Activated CD8-positive, alpha-beta T cell treated with anti-CD3 and anti-CD28 coated beads for 36 hours (primary cell): ENCODE measurements at regions of chr16 and their contacts with region 1.

Region 1: DNA sequence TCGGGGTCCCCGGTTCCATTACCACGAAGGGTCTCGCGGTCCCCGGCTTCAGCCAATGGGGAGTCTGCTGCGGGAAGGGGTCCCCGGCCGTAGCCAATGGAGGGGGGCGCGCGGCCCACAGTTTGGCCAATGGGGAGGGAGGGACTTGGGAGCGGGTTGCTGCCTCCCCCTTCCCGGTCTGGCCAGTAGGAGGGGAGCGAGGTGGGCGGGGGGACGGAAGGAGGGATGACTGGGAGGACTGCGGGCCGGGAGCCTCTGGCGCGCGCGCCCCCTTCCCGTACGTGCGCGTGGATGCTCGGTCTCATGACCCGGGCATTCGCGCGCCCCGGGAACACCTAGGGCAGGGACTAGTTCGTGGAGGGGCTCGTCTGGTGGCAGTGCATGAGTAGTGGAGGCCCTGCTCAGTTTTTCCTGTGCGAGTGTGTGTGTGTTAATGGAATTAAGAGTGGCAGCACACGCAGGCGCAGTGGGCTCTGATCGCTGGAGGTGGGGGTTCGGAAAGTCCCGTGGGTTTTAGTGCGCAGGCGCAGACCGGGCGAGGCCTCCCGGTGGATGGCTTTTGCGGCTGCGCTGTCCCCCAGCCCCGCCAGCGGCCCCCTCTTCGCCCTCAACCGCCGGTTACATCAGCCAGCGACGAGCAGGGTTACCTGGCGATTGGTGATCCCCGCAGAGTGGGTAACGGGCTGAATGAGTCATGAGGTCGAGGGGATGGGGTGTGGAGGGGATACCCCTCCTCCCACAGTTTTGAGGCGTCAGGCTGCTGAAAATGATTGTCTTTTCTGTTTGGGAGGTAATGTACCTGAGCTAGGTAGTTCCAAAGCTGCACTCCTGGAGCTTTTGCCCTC is 1.3 kb downstream of the ATXN2L start:
- DNase-seq: peak; percentile 98
- ATAC-seq: peak; percentile 78
- H3K4me3 Mint-ChIP-seq: peak overlapping the region; percentile 99
- H3K27ac Mint-ChIP-seq: peak overlapping the region; percentile 100
- H3K4me1 Mint-ChIP-seq: peaks cover 53% of the 10 kb centered on the region
- H3K27me3 Mint-ChIP-seq: no peaks in the 10 kb centered on the region
- CTCF ChIP-seq: no peak

Region 2: DNA sequence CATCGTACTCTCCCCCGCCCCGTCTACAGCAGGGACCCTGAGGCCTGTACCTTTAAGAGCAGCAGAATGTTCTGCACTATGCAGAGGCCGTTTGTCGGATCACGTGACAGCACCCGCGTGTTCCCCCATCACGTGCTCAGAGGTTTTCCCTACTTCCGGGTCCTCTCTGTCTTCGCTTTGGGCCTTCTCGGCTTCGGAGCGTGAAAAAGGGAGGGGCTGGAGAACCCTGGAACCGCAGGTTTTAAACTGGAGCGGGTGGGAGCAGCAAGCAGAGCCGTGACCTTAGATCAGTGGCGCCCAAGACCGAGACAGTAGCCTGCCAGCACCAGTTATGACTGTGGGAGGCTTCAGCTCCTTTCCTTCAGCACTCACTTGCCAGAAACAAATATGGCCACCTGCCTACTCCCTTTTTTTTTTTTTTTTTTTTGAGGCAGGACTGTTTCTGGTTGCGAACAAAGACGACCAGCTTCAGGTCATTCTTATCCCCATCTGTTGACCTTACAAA is 332.1 kb before region 1 on chr16 and contains the start of gene CLN3:
- CTCF ChIA-PET with region 1: no interaction called
- POLR2A ChIA-PET with region 1: interaction called, 4 read pairs
- intact Hi-C with region 1: loop called (anchors 5 kb)
- DNase-seq: peak; percentile 95
- ATAC-seq: peak; percentile 50
- H3K4me3 Mint-ChIP-seq: peak within 1 kb of the TSS; percentile 86
- H3K27ac Mint-ChIP-seq: peak within 1 kb of the TSS; percentile 100
- H3K4me1 Mint-ChIP-seq: peaks cover 52% of the 10 kb centered on the region
- H3K27me3 Mint-ChIP-seq: no peaks in the 10 kb centered on the region
- CTCF ChIP-seq: no peak
- total RNA-seq, gene CLN3: 24.2 to 30.2 TPM

Region 3: GRCh38 chr16:28553776-28554633 is 270.1 kb before region 1 on chr16 and contains the start of gene SGF29:
- CTCF ChIA-PET with region 1: no interaction called
- POLR2A ChIA-PET with region 1: interaction called, 12 read pairs
- intact Hi-C with region 1: no loop called
- DNase-seq: peak; percentile 96
- ATAC-seq: peak; percentile 91
- H3K4me3 Mint-ChIP-seq: peak within 1 kb of the TSS; percentile 90
- H3K27ac Mint-ChIP-seq: peak within 1 kb of the TSS; percentile 98
- H3K4me1 Mint-ChIP-seq: peaks cover 35% of the 10 kb centered on the region
- H3K27me3 Mint-ChIP-seq: no peaks in the 10 kb centered on the region
- CTCF ChIP-seq: peak; percentile 36
- total RNA-seq, gene SGF29: 25.0 TPM

Region 4: DNA sequence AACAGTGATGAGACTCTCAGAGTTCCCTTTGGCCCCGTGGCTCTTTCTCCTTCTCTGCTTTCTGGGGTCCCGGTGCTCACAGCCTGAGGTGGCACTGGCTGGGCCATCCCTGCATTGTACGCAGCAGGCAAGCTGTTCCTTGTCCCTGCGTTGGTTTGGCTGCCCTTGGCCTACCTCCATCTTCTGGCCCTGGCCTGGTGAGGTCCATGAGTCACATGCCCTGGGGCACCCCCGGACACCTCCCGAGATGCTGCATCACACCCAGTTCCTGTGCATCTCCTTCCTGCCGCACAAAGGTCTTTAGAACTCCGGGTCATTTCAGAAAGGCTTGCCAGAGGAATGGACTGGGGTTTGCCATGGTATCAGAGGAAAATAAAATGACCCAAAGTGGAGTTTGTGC is 236.7 kb before region 1 on chr16:
- CTCF ChIA-PET with region 1: no interaction called
- POLR2A ChIA-PET with region 1: no interaction called
- intact Hi-C with region 1: no loop called
- DNase-seq: no peak
- ATAC-seq: no peak
- H3K4me3 Mint-ChIP-seq: no peak overlapping the region
- H3K27ac Mint-ChIP-seq: peak overlapping the region; percentile 5
- H3K4me1 Mint-ChIP-seq: no peaks in the 10 kb centered on the region
- H3K27me3 Mint-ChIP-seq: no peaks in the 10 kb centered on the region
- CTCF ChIP-seq: no peak

Region 5: DNA sequence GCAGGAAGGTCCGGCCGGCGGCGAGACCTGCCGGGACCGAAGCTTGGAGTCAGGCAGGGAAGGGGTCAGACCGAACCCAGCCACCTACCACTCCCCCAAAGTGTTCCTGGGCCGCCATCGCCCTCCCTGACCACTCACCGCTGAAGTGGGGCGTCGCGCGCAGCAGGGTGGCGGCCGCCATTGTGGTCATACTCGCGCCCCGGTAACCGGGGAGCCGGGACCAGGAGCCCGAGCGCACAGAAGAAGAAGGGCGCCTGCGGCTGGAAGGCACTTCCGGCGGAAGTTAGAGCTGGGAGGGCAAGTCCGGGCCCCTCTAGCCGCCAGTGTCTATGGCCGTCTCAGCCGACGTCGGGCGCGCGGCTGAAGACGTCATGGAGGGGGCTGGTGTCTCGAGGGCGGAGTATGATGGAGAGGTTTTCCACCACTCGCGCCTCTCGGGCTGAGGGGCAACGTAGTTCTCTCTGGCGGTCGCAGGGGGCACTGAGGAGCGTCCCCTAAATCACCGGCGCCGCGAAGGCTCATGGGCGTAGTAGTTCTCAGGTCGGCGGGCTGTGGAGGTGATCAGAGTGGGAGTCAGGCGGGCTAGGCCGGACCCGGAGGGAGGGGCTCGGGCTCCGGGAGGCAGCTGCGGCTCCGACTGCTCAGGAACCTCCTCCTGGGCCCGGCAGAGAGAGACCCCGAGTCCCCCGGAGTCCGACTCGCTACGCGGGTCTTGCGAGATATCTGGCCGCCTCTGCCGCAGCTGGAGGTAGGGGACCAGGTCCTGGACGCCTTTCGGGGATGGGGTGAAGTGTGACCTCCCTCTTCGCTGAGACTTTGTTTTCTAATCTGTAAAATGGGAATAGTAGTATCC is 22.2 kb after region 1 on chr16 and contains the start of gene TUFM:
- CTCF ChIA-PET with region 1: interaction called, 5 read pairs
- POLR2A ChIA-PET with region 1: interaction called, 485 read pairs
- intact Hi-C with region 1: loop called (anchors 1 kb)
- DNase-seq: peak; percentile 98
- ATAC-seq: peak; percentile 95
- H3K4me3 Mint-ChIP-seq: peak within 1 kb of the TSS; percentile 99
- H3K27ac Mint-ChIP-seq: peak within 1 kb of the TSS; percentile 98
- H3K4me1 Mint-ChIP-seq: peaks cover 20% of the 10 kb centered on the region
- H3K27me3 Mint-ChIP-seq: no peaks in the 10 kb centered on the region
- CTCF ChIP-seq: peak; percentile 59
- total RNA-seq, gene TUFM: 309 to 323 TPM

Region 6: DNA sequence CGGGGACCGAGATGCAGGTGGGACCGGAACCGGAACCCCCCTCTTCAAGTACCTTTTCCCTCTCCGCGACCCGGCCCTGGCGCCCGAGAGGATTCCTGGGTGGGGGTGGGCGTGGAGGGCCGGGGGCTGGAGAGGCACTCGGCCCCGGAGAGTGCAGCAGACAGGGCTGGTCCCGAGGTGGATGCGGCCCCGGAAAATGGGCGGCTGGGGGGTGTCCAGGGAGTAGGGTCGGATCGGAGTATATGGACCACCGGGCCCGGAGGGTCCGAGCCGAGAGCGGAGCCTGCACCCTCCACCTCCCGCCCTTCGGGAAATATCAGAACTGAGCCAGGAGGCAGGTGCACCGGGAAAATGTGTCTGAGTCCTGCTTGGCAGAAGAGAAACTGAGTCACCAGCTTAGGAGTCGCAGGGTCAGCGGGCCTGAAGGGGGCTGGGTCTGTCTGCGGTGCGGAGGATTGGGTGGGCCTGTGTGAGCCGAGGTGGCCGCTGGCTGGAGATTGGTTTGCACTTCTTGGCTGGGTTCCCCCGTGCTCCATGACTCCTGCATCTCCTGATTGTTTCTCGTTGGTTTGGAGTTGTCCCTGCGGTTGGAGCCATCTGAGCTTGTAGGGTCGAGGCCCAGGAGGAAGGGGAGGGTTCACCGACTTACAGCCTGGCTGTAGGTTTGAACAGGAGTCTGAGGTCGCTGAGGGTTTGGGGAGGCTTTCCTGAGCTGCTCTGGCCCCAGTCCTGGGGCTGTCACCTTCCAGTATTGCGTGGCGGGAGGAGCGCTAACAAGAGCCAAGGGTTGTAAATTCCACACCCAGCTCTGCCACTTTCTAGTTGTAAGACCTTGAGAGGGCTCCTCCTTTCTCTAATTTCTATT is 40.1 kb after region 1 on chr16:
- CTCF ChIA-PET with region 1: interaction called, 3 read pairs
- POLR2A ChIA-PET with region 1: interaction called, 34 read pairs
- intact Hi-C with region 1: no loop called
- DNase-seq: no peak
- ATAC-seq: no peak
- H3K4me3 Mint-ChIP-seq: peak overlapping the region; percentile 98
- H3K27ac Mint-ChIP-seq: peak overlapping the region; percentile 99
- H3K4me1 Mint-ChIP-seq: peaks cover 24% of the 10 kb centered on the region
- H3K27me3 Mint-ChIP-seq: no peaks in the 10 kb centered on the region
- CTCF ChIP-seq: no peak

Region 7: DNA sequence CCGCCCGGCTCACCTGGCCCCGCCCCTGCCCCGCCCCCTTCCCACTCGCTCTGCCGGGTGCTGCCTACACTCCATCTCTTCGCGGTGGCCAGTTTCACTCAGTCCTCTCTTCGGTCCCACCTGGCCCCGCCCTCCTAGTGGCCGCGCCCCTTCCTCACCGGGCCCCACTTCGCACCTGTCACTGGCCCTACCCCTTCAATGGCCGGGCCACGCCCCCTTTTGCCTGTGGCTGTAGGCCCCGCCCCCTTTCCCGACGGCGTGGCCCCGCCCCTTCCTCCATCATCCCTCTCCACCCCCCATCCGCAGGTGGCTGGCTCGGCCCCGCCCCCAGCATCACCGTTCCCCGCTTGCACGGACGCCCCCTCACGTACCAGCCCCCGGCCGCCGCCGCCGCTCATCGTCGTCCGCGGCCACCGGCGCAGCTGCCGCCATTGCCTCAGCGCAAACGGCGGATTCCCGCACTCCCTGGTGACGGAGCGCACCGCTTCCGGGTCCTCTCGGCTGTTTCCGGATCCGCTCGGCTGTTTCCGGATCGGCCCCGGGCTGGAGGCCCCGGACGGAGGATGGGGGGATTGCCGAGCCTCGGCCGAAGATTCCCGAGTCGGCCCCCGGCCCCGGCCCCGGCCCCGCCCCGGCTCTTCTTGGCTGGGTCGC is 100.8 kb after region 1 on chr16 and contains the start of gene RABEP2:
- CTCF ChIA-PET with region 1: no interaction called
- POLR2A ChIA-PET with region 1: interaction called, 12 read pairs
- intact Hi-C with region 1: no loop called
- DNase-seq: peak; percentile 96
- ATAC-seq: peak; percentile 90
- H3K4me3 Mint-ChIP-seq: peak within 1 kb of the TSS; percentile 93
- H3K27ac Mint-ChIP-seq: peak within 1 kb of the TSS; percentile 97
- H3K4me1 Mint-ChIP-seq: peaks cover 15% of the 10 kb centered on the region
- H3K27me3 Mint-ChIP-seq: no peaks in the 10 kb centered on the region
- CTCF ChIP-seq: no peak
- total RNA-seq, gene RABEP2: 13.1 to 14.0 TPM

Region 8: DNA sequence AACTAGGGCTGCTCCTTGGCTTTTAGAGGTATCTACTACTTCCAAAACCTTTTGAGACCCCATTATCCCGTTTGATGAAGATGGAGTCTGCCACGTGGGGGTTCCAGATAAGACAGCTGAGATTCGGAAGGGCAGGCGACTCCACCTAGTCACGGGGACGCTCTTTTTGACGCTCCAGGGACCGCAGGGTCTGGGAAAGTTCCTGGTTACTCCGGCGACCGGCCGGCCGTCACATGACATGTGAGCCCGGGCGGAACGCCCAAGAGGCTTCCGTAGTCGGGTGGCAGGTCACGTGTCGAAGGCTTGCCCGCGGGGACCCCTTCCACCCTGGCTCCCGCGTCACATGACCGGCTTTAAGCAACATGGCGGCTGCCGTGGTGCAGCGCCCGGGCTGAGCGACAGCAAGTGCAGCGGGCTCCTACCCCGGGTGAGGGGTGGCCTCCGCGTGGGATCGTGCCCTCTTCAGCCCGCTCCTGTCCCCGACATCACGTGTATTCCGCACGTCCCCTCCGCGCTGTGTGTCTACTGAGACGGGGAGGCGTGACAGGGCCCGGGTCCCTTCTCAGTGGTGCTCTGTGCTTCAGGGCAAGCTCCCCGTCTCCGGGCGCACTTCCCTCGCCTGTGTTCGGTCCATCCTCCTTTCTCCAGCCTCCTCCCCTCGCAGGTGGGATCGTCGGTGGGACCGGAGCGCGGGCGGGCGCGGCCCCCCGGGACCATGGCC is 150.5 kb after region 1 on chr16 and contains the start of gene SPNS1:
- CTCF ChIA-PET with region 1: no interaction called
- POLR2A ChIA-PET with region 1: interaction called, 10 read pairs
- intact Hi-C with region 1: no loop called
- DNase-seq: peak; percentile 98
- ATAC-seq: peak; percentile 94
- H3K4me3 Mint-ChIP-seq: peak within 1 kb of the TSS; percentile 98
- H3K27ac Mint-ChIP-seq: peak within 1 kb of the TSS; percentile 90
- H3K4me1 Mint-ChIP-seq: peaks cover 29% of the 10 kb centered on the region
- H3K27me3 Mint-ChIP-seq: no peaks in the 10 kb centered on the region
- CTCF ChIP-seq: no peak
- total RNA-seq, gene SPNS1: 14.6 to 18.2 TPM